ENCODE measurements at regions of chr15 and their contacts with region 1.

Region 1: GRCh38 chr15:33292717-33293307 is 18.0 kb upstream of the RYR3 start:
- DNase-seq: no peak
- H3K4me3 ChIP-seq: no peak overlapping the region
- H3K27ac ChIP-seq: no peak overlapping the region
- H3K4me1 ChIP-seq: no peaks in the 10 kb centered on the region
- H3K27me3 ChIP-seq: no peaks in the 10 kb centered on the region
- CTCF ChIP-seq: peak in 2 of 3 experiments; percentile 42 to 50
- POLR2A ChIP-seq: no peak

Region 2: GRCh38 chr15:33211176-33211808 is 81.5 kb before region 1 on chr15:
- intact Hi-C with region 1: no loop called
- DNase-seq: no peak
- H3K4me3 ChIP-seq: no peak overlapping the region
- H3K27ac ChIP-seq: no peak overlapping the region
- H3K4me1 ChIP-seq: no peaks in the 10 kb centered on the region
- H3K27me3 ChIP-seq: no peaks in the 10 kb centered on the region
- CTCF ChIP-seq: no peak
- POLR2A ChIP-seq: no peak

Region 3: DNA sequence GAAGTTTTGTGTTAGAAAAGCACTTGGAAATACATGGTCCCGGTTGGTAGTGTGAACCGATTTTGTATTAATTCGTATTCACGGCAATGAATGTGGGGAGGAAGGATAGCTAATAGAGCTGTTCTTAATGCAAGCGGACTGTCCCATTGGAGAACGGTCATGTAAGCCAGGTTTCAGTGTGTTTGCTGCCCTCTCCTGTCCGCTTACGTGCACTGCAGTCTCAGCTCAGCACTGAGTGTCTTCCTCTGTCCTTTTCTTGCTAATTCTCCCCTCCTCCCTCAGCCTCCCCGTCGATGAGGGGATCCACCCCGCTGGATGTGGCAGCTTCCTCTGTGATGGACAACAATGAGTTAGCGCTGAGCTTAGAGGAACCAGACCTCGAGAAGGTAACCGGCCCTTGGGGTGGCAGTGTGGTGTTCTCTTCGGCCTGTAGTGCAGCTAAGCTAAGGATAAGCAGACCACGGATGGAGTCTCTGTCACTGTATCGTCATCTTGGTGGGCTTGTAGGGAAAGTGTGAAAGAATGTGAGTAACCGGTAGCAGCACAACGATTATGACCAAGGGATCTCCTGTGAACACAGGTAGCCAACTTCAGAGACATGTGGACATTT is 408.0 kb after region 1 on chr15:
- intact Hi-C with region 1: loop called (anchors 10 kb)
- DNase-seq: no peak
- H3K4me3 ChIP-seq: no peak overlapping the region
- H3K27ac ChIP-seq: no peak overlapping the region
- H3K4me1 ChIP-seq: peaks cover 5% of the 10 kb centered on the region
- H3K27me3 ChIP-seq: no peaks in the 10 kb centered on the region
- CTCF ChIP-seq: peak; percentile 71 to 78 (median 77)
- POLR2A ChIP-seq: no peak